ENCODE measurements at regions of chr10 and their contacts with region 1.

Region 1: GRCh38 chr10:96586419-96587263 is at the start of gene TM9SF3:
- DNase-seq: peak; percentile 94
- H3K4me3 Mint-ChIP-seq: peak within 1 kb of the TSS; percentile 84
- H3K27ac Mint-ChIP-seq: peak within 1 kb of the TSS; percentile 88
- H3K4me1 Mint-ChIP-seq: peaks cover 32% of the 10 kb centered on the region
- H3K27me3 Mint-ChIP-seq: peaks cover 2% of the 10 kb centered on the region
- total RNA-seq, gene TM9SF3: 39.6 to 41.0 TPM

Region 2: GRCh38 chr10:95236068-95236903 is 1350.4 kb before region 1 on chr10:
- CTCF ChIA-PET with region 1: no interaction called
- intact Hi-C with region 1: loop called (anchors 5 kb)
- DNase-seq: peak; percentile 26
- H3K4me3 Mint-ChIP-seq: no peak overlapping the region
- H3K27ac Mint-ChIP-seq: peak overlapping the region; percentile 75
- H3K4me1 Mint-ChIP-seq: peaks cover 19% of the 10 kb centered on the region
- H3K27me3 Mint-ChIP-seq: peaks cover 20% of the 10 kb centered on the region

Region 3: GRCh38 chr10:96138102-96138501 is 448.5 kb before region 1 on chr10:
- CTCF ChIA-PET with region 1: no interaction called
- intact Hi-C with region 1: no loop called
- DNase-seq: no peak
- H3K4me3 Mint-ChIP-seq: no peak overlapping the region
- H3K27ac Mint-ChIP-seq: no peak overlapping the region
- H3K4me1 Mint-ChIP-seq: peaks cover 12% of the 10 kb centered on the region
- H3K27me3 Mint-ChIP-seq: no peaks in the 10 kb centered on the region

Region 4: DNA sequence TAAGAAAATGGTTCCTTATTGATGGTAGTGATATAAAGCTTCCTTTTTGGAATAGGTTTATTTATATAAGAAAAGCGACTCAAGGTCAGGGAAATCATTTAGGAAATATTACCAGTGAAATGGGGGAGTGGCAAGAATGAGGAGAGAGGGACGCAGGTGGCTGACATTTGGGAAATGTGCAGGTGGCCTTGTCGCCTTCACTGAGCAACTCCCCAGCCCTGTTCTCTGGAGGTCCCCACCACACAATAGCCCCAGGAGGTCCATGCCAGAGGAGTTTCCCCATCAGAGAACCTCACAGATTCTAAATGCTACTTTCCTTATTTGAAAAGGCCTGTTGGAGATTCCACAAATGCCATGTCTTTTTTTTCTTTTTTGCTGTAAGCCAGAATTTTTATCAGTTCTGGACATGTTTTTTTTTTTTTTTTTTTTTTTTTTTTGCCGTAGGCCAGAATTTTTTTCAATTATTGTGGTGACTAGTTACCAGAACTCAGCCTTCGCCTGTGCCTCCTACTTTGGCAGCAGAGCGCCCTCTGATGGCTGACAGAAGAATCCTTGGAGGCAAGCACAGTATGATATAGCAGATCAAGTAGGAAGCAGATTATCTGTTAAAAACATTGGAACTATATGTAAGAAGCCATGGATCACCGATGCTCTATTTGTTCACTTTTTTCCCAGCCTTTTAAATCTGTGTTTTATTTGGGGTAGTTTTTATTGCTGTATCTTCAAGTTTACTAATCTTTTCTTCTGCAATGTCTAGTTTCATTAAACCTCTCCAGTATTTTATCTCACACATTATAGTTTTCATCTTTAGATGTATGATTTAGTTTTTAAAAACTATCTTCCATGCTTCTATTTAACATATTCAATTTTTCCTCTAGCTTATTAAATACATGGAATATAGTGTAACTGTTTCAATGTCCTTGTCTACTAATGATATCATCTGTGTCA is 246.4 kb before region 1 on chr10:
- CTCF ChIA-PET with region 1: no interaction called
- intact Hi-C with region 1: loop called (anchors 1 kb)
- DNase-seq: peak; percentile 83
- H3K4me3 Mint-ChIP-seq: no peak overlapping the region
- H3K27ac Mint-ChIP-seq: no peak overlapping the region
- H3K4me1 Mint-ChIP-seq: peaks cover 6% of the 10 kb centered on the region
- H3K27me3 Mint-ChIP-seq: no peaks in the 10 kb centered on the region

Region 5: GRCh38 chr10:96695366-96695765 is 108.7 kb after region 1 on chr10:
- CTCF ChIA-PET with region 1: interaction called, 3 read pairs
- intact Hi-C with region 1: loop called (anchors 1 kb)
- DNase-seq: peak; percentile 55
- H3K4me3 Mint-ChIP-seq: no peak overlapping the region
- H3K27ac Mint-ChIP-seq: peak overlapping the region; percentile 68
- H3K4me1 Mint-ChIP-seq: peaks cover 23% of the 10 kb centered on the region
- H3K27me3 Mint-ChIP-seq: no peaks in the 10 kb centered on the region

Region 6: DNA sequence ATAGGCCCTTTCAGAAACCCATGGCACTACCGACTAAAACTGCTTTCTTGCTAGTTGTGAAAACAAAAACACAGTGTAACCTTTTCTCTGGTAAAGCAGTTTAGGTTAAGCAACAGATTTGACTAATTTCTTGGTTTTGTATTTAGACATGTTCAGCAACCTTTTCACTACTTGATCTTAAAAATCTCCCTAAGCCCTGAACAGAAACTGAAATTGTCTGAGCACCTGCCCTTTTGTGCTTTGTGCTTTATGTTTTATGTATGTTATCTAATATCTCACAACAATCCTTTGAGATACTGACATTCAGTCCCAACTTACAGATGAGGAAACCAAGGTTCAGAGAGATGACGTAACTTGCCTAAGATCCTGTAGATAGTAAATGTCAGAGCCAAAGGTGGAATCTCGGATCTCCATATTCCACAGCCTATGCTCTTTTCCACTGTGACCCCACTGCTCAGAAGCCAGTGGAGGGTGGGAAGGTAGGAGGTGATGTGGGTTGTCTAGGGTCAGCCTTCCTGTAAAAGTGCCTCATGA is 392.0 kb after region 1 on chr10:
- CTCF ChIA-PET with region 1: no interaction called
- intact Hi-C with region 1: loop called (anchors 1 kb)
- DNase-seq: peak; percentile 28
- H3K4me3 Mint-ChIP-seq: no peak overlapping the region
- H3K27ac Mint-ChIP-seq: peak overlapping the region; percentile 4
- H3K4me1 Mint-ChIP-seq: peaks cover 11% of the 10 kb centered on the region
- H3K27me3 Mint-ChIP-seq: no peaks in the 10 kb centered on the region

Region 7: GRCh38 chr10:97334370-97335175 is 747.9 kb after region 1 on chr10 and contains the start of gene FRAT2:
- CTCF ChIA-PET with region 1: no interaction called
- intact Hi-C with region 1: loop called (anchors 5 kb)
- DNase-seq: peak; percentile 87
- H3K4me3 Mint-ChIP-seq: peak within 1 kb of the TSS; percentile 75
- H3K27ac Mint-ChIP-seq: peak within 1 kb of the TSS; percentile 86
- H3K4me1 Mint-ChIP-seq: peaks cover 32% of the 10 kb centered on the region
- H3K27me3 Mint-ChIP-seq: no peaks in the 10 kb centered on the region
- total RNA-seq, gene FRAT2: 5.1 to 5.6 TPM

Region 8: GRCh38 chr10:98134431-98135221 is 1548.0 kb after region 1 on chr10 and contains the start of gene R3HCC1L:
- CTCF ChIA-PET with region 1: interaction called, 3 read pairs
- intact Hi-C with region 1: loop called (anchors 5 kb)
- DNase-seq: peak; percentile 94
- H3K4me3 Mint-ChIP-seq: peak within 1 kb of the TSS; percentile 89
- H3K27ac Mint-ChIP-seq: peak within 1 kb of the TSS; percentile 96
- H3K4me1 Mint-ChIP-seq: peaks cover 36% of the 10 kb centered on the region
- H3K27me3 Mint-ChIP-seq: no peaks in the 10 kb centered on the region
- total RNA-seq, gene R3HCC1L: 13.4 to 13.6 TPM